ENCODE measurements at regions of chr12 and their contacts with region 1.

Region 1: DNA sequence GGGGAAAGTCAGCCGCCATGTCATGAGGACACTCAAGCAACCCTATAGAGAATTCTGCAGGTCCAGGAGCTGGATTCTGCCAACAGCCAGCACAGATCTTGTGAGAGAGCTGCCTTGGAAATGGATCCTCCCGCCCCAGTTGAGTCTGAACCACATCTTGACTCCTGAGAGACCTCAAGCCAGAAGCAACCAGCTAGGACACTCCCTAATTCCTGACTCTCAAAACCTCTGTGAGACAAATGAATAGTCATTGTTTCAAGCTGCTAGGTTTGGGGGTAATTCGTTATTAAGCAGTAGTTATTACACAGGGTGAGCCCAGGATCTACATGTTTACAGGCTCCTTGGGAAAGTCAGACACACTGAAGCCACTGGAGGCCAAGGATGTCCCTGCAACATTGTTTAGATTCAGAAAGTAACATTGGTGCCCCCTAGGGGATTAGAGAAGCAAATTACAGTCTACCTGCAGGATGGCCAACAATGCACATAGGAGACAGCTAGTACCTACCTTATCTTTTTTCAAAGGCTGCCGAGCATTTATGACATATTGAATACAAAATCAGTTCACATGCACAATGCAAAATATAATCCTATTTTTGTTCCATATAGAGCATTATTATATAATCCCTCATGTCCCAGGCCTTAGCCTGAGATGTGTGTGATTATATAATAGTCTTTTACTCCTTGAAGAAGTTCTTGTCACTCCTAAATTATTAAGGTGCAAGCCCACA is 57.9 kb upstream of the FICD start:
- H3K4me3 Mint-ChIP-seq: no peak overlapping the region
- H3K27ac Mint-ChIP-seq: peak overlapping the region; percentile 76
- H3K4me1 Mint-ChIP-seq: peaks cover 23% of the 10 kb centered on the region
- H3K27me3 Mint-ChIP-seq: peaks cover 29% of the 10 kb centered on the region

Region 2: DNA sequence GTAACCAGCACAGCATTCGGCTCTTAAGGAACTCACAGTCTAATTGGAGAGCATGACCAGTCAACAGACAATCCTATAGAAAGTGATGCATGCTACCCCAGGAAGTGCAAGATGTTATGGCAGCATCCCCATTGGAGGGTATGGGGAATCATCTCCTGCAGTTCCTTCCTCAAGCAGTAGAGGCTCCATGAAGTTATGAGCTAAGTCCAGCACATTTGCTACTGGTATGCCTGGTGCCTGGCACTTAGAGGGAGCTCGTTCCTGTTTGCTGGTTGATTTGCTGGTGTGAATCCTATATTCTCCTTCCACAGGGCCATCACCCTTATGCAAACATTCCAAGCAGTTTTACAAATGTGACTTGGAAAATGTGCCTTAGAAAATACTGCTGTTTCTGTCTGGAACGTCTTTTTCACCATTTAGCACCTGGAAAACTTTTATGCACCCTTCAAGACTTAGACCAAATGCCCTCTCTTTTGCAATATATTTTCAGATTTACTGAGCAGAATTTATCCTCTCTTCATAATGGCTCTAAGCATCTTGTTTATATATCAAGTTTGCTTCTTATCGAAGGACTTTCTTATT is 464.2 kb before region 1 on chr12:
- intact Hi-C with region 1: loop called (anchors 5 kb)
- H3K4me3 Mint-ChIP-seq: no peak overlapping the region
- H3K27ac Mint-ChIP-seq: no peak overlapping the region
- H3K4me1 Mint-ChIP-seq: no peaks in the 10 kb centered on the region
- H3K27me3 Mint-ChIP-seq: peaks cover 28% of the 10 kb centered on the region

Region 3: DNA sequence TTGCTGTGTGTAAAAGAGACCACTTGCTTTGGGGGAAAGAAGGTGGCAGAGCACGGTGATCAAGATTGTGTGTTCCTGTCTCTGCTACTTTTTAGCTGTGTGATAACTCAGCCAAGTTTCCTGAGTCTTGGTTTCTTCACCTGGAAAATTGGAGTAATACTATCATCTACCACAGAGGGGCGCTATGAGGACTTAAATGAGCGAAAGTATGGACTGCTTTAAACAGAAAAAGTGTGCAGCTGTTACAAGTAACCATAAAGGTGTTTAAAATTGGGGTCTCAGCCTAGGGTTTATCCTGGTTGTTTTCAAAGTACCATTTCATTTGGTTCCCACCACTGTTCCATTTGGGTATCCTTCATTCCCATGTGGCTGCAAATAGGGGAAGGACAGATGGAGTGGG is 394.0 kb before region 1 on chr12:
- intact Hi-C with region 1: loop called (anchors 5 kb)
- H3K4me3 Mint-ChIP-seq: no peak overlapping the region
- H3K27ac Mint-ChIP-seq: no peak overlapping the region
- H3K4me1 Mint-ChIP-seq: no peaks in the 10 kb centered on the region
- H3K27me3 Mint-ChIP-seq: peaks cover 18% of the 10 kb centered on the region

Region 4: DNA sequence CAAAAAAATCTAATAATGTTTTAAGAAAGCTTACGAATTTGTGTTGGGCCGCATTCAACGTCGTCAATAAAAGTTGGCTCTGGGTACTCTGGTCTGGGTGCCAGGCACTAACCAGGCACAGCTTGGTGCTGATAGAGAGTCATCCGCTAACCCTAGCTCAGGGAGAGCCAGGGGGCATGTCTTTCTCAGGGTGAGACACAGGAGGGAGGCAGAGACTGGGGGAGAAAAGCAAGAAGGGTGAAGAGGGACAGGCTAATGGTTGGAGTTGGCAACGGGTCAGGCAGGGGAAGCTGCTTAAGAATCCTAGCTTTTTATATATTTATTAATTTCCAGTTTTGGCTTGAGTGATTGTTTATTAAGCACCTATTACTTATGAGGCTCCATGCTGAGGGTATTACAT is 223.0 kb before region 1 on chr12:
- intact Hi-C with region 1: loop called (anchors 1 kb)
- H3K4me3 Mint-ChIP-seq: no peak overlapping the region
- H3K27ac Mint-ChIP-seq: no peak overlapping the region
- H3K4me1 Mint-ChIP-seq: no peaks in the 10 kb centered on the region
- H3K27me3 Mint-ChIP-seq: peaks cover 41% of the 10 kb centered on the region

Region 5: DNA sequence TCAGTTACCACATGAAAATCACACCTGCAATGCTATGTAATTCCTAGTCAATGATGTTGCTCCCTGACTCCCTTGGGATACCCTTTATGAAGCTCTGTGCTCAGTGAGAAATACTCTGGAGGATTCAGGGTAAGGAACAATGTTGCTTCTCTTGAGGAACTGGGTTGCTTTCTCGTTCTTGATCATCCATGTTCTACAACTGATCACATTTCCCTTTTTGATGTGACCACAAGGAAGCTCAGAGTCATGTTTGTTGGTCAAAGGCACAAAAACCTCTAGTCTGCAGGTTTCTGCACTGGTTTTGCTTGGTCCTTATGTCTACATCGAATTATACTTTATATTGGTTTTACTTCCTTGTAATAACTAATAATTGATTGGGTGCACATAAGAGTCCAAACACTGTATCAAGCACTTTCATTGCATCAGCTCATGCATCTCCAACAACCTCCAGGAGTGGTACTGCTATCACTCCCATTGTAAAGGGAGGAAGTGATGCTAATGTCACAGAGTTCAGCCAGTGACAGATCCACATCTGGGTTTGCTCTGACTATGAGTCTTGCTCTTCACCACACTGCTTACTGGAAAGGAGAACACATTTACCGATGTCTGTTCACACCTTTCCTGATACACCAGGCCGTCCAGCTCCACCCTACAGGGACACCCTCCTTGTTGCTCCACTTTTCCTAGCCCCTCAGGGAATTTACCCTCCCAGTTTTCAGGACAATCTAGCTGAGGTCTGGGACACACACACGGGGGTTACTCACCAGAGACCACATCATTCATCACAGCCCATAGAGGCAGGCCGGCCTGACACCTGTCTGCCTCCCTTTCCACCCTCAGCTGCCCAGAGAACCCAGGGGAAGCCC is 159.0 kb before region 1 on chr12:
- intact Hi-C with region 1: loop called (anchors 5 kb)
- H3K4me3 Mint-ChIP-seq: peak overlapping the region; percentile 69
- H3K27ac Mint-ChIP-seq: peak overlapping the region; percentile 75
- H3K4me1 Mint-ChIP-seq: peaks cover 91% of the 10 kb centered on the region
- H3K27me3 Mint-ChIP-seq: peaks cover 14% of the 10 kb centered on the region

Region 6: GRCh38 chr12:108337235-108338223 is 119.6 kb before region 1 on chr12:
- intact Hi-C with region 1: loop called (anchors 5 kb)
- H3K4me3 Mint-ChIP-seq: peak overlapping the region; percentile 94
- H3K27ac Mint-ChIP-seq: peak overlapping the region; percentile 95
- H3K4me1 Mint-ChIP-seq: peaks cover 75% of the 10 kb centered on the region
- H3K27me3 Mint-ChIP-seq: peaks cover 1% of the 10 kb centered on the region

Region 7: GRCh38 chr12:108468201-108468968 is 11.2 kb after region 1 on chr12:
- intact Hi-C with region 1: no loop called
- H3K4me3 Mint-ChIP-seq: no peak overlapping the region
- H3K27ac Mint-ChIP-seq: no peak overlapping the region
- H3K4me1 Mint-ChIP-seq: no peaks in the 10 kb centered on the region
- H3K27me3 Mint-ChIP-seq: peaks cover 7% of the 10 kb centered on the region

Measured in dendritic cell treated with granulocyte-macrophage colony-stimulating factor and Interleukin-4, amounts not matched to agents 40 ng/mL and 50 ng/mL, for 4 days (primary cell).